Tibial artery (tissue), 4 donors: ENCODE measurements at regions of chr13 and their contacts with region 1.

Region 1: GRCh38 chr13:20525690-20526544 is at the start of gene CRYL1:
- DNase-seq: peak; percentile 80 to 88
- H3K4me3 ChIP-seq: peak within 1 kb of the TSS; percentile 92 to 97
- H3K27ac ChIP-seq: peak within 1 kb of the TSS; percentile 83 to 86
- H3K4me1 ChIP-seq: peaks cover 0 to 17% (median 7%) of the 10 kb centered on the region in 4 donors
- H3K27me3 ChIP-seq: peaks cover 0 to 3% of the 10 kb centered on the region in 2 donors
- CTCF ChIP-seq: no peak

Region 2: GRCh38 chr13:20451397-20451796 is 74.5 kb before region 1 on chr13:
- intact Hi-C with region 1: no loop called
- DNase-seq: no peak
- H3K4me3 ChIP-seq: no peak overlapping the region
- H3K27ac ChIP-seq: no peak overlapping the region
- H3K4me1 ChIP-seq: no peaks in the 10 kb centered on the region
- H3K27me3 ChIP-seq: no peaks in the 10 kb centered on the region
- CTCF ChIP-seq: no peak

Region 3: DNA sequence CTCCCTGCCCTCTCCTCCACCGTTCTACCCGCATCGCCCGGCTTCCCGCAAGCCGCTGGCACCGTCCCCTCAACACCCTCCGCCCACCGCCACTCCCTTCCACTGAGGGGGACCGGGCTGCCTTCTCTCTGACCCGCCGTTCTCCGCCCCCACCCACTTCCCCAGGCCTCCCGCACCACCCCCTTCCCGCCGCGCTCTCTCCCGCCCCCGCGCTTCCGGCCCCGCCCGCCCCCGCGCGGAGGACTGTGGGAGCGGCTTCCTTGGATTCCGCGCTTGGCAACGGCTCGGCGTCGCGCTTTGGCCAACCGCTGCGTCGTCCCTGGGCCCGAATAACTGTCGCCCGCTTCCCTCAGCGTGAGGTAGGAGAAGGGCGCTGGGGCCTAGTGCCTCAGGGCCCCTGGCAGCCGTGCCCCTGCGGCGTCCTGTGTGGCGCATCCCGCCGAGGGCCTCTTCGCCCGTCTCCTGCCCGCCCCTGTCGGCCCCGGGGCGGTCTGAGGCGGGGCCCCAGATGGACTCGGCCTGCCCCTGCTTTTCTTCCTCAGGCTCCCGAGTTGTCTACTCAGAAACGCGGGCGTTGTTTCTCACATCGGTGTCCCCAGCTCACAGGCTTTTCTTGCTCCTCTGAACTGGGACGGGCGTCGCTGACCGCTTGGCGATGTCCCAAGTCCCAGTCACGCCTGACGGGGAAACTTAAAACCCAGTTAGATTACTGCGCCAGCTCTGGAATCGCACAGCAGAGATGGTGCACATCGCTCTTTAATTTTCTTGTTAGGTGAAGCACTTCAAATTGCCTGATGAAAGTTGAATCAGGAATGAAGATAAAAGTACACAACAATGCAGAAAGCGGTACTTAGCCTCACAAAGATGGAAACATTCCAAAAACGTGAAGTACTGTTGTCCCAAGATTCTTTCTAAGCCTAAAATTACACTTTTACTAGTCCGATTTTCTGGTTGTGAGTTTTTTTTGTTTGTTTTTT is 41.3 kb after region 1 on chr13 and contains the start of gene IFT88:
- intact Hi-C with region 1: loop called (anchors 5 kb)
- DNase-seq: peak; percentile 85 to 94
- H3K4me3 ChIP-seq: peak within 1 kb of the TSS; percentile 73 to 80
- H3K27ac ChIP-seq: peak within 1 kb of the TSS; percentile 89 to 93
- H3K4me1 ChIP-seq: peaks cover 0 to 17% (median 4%) of the 10 kb centered on the region in 4 donors
- H3K27me3 ChIP-seq: no peaks in the 10 kb centered on the region
- CTCF ChIP-seq: no peak